AG04449 (cell line): ENCODE measurements at regions of chr11 and their contacts with region 1.

Region 1: GRCh38 chr11:88231894-88232482 is 56.7 kb upstream of the RAB38 start:
- DNase-seq: no peak
- H3K4me3 ChIP-seq: no peak overlapping the region
- CTCF ChIP-seq: peak; percentile 46

Region 2: DNA sequence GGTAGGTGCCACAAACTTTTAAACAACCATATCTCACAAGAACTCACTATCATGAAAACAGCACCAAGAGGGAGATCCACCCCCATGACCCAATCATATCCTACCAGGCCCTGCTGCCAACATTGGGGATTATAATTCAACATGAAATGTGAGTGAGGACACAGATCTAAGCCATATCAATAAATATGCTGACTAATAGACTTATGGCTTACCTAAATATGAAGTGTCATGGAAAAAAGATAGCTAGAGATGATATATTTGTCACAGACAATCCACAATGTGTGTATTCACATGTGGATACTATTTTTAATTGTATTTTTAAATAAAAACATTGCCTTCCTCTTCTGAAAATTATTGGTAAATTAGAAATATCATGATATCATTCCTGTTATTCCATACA is 18.6 kb before region 1 on chr11:
- CTCF ChIA-PET with region 1: interaction called, 16 read pairs
- POLR2A ChIA-PET with region 1: no interaction called
- DNase-seq: no peak
- H3K4me3 ChIP-seq: no peak overlapping the region
- CTCF ChIP-seq: no peak

Region 3: GRCh38 chr11:88246696-88247095 is 14.7 kb after region 1 on chr11:
- CTCF ChIA-PET with region 1: interaction called, 13 read pairs
- POLR2A ChIA-PET with region 1: no interaction called
- DNase-seq: peak; percentile 31
- H3K4me3 ChIP-seq: no peak overlapping the region
- CTCF ChIP-seq: no peak

Region 4: GRCh38 chr11:88543902-88544655 is 312.1 kb after region 1 on chr11:
- CTCF ChIA-PET with region 1: interaction called, 119 read pairs
- POLR2A ChIA-PET with region 1: no interaction called
- DNase-seq: peak; percentile 70
- H3K4me3 ChIP-seq: no peak overlapping the region
- CTCF ChIP-seq: peak; percentile 90

Region 5: GRCh38 chr11:88552377-88553062 is 320.5 kb after region 1 on chr11:
- CTCF ChIA-PET with region 1: interaction called, 33 read pairs
- POLR2A ChIA-PET with region 1: no interaction called
- DNase-seq: no peak
- H3K4me3 ChIP-seq: no peak overlapping the region
- CTCF ChIP-seq: peak; percentile 75